GM10248 (cell line): ENCODE measurements at regions of chr7 and their contacts with region 1.

Region 1: GRCh38 chr7:39580149-39580874 is 14.1 kb downstream of the YAE1 start:
- DNase-seq: peak; percentile 82
- CTCF ChIP-seq: peak; percentile 83

Region 2: DNA sequence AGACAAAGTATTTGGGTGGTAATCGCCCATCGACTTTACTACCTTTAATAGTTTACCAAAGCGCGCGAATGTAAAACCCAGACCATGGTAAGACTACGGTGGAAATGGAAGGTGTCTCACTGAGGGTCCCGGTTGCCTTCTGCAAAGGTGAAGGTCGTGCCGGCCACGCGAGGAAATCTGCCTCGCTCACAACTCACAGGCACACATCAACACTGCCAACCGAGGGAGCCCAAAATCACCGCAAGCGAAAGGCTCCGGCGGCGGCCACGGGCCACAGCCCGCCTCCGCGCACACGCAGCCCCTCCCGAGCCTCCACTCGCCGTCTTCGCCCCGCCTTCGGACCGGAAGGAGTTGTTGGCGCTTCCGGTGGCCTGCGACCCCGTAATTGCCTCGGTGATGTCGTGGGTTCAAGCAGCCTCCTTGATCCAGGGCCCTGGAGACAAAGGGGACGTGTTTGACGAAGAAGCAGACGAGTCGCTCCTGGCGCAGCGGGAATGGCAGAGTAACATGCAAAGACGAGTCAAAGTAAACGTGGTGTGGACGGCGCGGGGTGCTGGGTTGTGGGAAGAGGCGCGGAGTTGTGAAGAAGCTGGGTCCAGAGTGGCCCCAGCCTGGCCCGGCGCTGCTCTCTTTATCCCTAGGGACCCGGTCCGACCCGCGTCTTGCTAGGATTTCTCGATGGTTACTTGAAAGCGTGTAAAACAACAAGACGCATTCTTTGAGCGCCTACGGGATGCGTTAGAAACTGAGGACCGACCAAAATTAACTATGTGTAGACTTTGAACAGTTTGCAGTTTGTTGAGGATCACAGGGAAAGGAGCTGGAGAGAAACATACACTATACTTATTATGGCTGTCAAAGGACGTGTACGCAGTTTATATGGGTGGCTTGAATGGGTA is 14.0 kb before region 1 on chr7 and contains the start of gene YAE1:
- CTCF ChIA-PET with region 1: interaction called, 29 read pairs
- POLR2A ChIA-PET with region 1: no interaction called
- DNase-seq: peak; percentile 94
- CTCF ChIP-seq: no peak

Region 3: GRCh38 chr7:39609113-39609934 is 29.0 kb after region 1 on chr7:
- CTCF ChIA-PET with region 1: interaction called, 24 read pairs
- POLR2A ChIA-PET with region 1: no interaction called
- DNase-seq: peak; percentile 50
- CTCF ChIP-seq: peak; percentile 6

Region 4: DNA sequence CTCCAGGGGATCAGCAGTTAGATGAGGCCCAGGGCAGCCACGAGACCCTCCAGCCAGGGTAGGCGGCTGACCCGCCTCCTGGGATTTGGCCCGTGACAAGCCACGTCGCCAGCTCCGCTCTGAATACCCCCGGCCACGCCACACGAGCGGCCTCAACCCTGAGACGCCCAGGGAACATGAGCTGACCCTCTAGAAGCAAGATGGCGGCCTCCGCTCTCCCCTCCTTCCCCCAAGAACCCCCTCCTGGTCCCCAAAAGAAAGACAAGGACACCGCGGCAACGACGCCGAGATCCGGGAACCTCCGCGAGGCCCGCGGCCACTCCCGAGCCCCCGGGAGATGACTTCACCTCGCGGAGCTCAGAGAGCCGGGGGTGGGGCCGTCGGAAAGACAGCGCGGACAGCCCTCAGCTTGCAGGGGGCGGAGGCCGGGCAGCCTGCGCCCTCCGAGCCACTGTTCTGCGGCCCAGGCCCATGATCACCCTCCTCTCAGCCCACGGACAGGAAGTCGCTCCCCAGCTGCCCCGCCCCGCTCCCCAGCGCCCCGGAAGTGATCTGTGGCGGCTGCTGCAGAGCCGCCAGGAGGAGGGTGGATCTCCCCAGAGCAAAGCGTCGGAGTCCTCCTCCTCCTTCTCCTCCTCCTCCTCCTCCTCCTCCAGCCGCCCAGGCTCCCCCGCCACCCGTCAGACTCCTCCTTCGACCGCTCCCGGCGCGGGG is 42.9 kb after region 1 on chr7 and contains the start of gene RALA:
- CTCF ChIA-PET with region 1: interaction called, 24 read pairs
- POLR2A ChIA-PET with region 1: interaction called, 4 read pairs
- DNase-seq: peak; percentile 95
- CTCF ChIP-seq: no peak

Region 5: DNA sequence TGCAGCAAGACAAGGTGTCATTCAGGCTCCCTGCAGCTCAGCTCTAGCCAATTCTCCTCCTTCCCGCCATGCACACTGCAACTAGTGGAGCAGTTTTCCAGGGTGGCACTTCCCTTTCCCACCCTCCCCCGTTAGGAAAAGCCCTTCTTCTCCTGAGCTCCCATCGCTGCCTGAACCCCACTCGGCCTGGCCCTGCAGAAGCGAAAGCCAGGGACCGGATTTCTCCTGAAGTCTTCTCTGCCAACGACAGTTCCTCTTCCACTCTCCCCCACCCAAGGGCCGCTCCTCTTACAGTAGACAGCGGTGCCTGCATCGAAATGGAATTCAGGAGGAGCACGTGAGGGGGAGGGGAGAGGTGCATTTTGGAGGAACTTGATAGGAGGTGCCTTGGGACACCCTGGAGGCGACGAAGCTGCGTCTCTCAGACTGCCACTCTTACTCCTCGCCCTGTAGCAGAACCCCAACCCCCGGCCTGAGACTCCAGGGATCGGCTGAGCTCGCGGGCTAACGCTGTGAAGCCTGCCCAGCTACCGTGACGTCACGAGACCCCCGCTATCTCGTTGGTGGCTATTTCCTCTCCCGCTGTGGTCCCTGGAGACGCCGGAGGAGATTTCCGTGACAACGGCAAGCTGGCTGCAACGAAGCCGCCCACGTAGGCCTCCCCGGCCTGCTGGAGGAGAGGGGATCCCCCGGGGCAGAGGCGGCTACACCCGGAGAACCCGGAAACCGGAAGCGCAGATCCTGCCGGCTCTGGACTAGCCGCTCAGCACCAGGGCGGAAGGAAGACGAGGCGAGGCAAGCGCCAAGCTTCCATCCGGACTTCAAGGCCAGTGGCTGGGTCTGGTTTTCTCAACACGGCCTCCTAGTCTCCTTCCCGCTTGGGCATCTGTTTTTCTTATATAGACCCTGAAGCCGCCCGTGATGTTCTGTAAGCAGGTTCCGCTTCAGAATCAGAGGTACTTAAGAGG is 152.8 kb after region 1 on chr7:
- CTCF ChIA-PET with region 1: interaction called, 464 read pairs
- POLR2A ChIA-PET with region 1: interaction called, 3 read pairs
- DNase-seq: peak; percentile 96
- CTCF ChIP-seq: no peak

Region 6: DNA sequence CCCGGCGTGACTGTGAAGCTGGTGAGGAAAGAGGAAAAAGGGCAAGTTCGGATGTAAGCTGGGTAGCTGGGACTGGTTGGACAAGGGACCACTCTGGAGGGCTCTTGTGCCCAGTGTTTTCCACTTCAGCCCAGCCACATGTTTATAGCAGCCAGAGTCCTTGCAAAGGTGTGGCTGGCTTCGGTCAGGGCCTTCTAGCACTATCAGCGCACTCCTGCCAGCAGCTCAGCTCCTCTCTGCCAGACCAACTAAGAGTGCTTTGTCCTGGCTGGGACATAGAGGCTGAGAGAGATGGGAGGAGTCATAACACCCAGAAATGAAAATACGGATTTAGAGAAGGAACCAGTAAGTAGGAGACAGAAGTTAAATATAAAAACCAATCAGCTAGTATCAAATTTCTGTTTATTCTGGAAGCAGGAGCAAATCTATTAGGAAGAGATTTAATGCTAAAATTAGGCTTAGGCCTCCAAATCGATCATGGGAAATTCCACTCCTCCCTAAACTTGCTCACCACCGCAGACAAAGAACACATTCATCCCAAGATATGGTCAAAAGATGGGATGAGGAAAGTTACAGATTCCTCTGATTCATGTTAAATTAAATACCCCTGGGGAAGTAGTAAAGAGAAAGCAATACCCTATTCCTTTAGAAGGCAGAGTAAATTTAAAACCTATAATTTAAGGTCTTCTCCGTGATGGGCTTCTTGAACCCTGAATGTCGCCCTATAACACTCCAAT is 178.1 kb after region 1 on chr7:
- CTCF ChIA-PET with region 1: interaction called, 464 read pairs
- POLR2A ChIA-PET with region 1: no interaction called
- DNase-seq: no peak
- CTCF ChIP-seq: no peak